Naive thymus-derived CD4-positive, alpha-beta T cell (primary cell): ENCODE measurements at regions of chr3 and their contacts with region 1.

Region 1: GRCh38 chr3:195411836-195412235 is 31.0 kb downstream of the ACAP2 start:
- DNase-seq: no peak
- ATAC-seq: no peak
- H3K4me3 ChIP-seq: no peak overlapping the region
- H3K4me3 Mint-ChIP-seq: no peak overlapping the region
- H3K27ac ChIP-seq: no peak overlapping the region
- H3K27ac Mint-ChIP-seq: no peak overlapping the region
- H3K4me1 ChIP-seq: peaks cover 11 to 26% of the 10 kb centered on the region in 2 donors
- H3K4me1 Mint-ChIP-seq: peaks cover 36 to 87% (median 75%) of the 10 kb centered on the region in 7 donors
- H3K27me3 ChIP-seq: no peaks in the 10 kb centered on the region
- H3K27me3 Mint-ChIP-seq: no peaks in the 10 kb centered on the region

Region 2: GRCh38 chr3:195377247-195377646 is 34.6 kb before region 1 on chr3:
- CTCF ChIA-PET with region 1: no interaction called
- POLR2A ChIA-PET with region 1: no interaction called
- intact Hi-C with region 1: loop called in 1 of 2 experiments (anchors 5 kb)
- DNase-seq: no peak
- ATAC-seq: no peak
- H3K4me3 ChIP-seq: no peak overlapping the region
- H3K4me3 Mint-ChIP-seq: no peak overlapping the region
- H3K27ac ChIP-seq: no peak overlapping the region
- H3K27ac Mint-ChIP-seq: peak overlapping the region in 1 of 9 donors; percentile 10
- H3K4me1 ChIP-seq: no peaks in the 10 kb centered on the region
- H3K4me1 Mint-ChIP-seq: peaks cover 0 to 21% (median 6%) of the 10 kb centered on the region in 7 donors
- H3K27me3 ChIP-seq: no peaks in the 10 kb centered on the region
- H3K27me3 Mint-ChIP-seq: no peaks in the 10 kb centered on the region

Region 3: GRCh38 chr3:195450731-195451229 is 38.9 kb after region 1 on chr3:
- CTCF ChIA-PET with region 1: no interaction called
- POLR2A ChIA-PET with region 1: no interaction called
- intact Hi-C with region 1: no loop called
- DNase-seq: no peak
- ATAC-seq: peak; percentile 37
- H3K4me3 ChIP-seq: no peak overlapping the region
- H3K4me3 Mint-ChIP-seq: no peak overlapping the region
- H3K27ac ChIP-seq: no peak overlapping the region
- H3K27ac Mint-ChIP-seq: no peak overlapping the region
- H3K4me1 ChIP-seq: peaks cover 0 to 5% of the 10 kb centered on the region in 2 donors
- H3K4me1 Mint-ChIP-seq: peaks cover 10 to 26% (median 12%) of the 10 kb centered on the region in 7 donors
- H3K27me3 ChIP-seq: no peaks in the 10 kb centered on the region
- H3K27me3 Mint-ChIP-seq: peaks cover 0 to 2% (median 0%) of the 10 kb centered on the region in 5 donors

Region 4: GRCh38 chr3:197103766-197104165 is 1691.9 kb after region 1 on chr3:
- CTCF ChIA-PET with region 1: no interaction called
- POLR2A ChIA-PET with region 1: no interaction called
- intact Hi-C with region 1: no loop called
- DNase-seq: no peak
- ATAC-seq: no peak
- H3K4me3 ChIP-seq: no peak overlapping the region
- H3K4me3 Mint-ChIP-seq: no peak overlapping the region
- H3K27ac ChIP-seq: no peak overlapping the region
- H3K27ac Mint-ChIP-seq: no peak overlapping the region
- H3K4me1 ChIP-seq: no peaks in the 10 kb centered on the region
- H3K4me1 Mint-ChIP-seq: no peaks in the 10 kb centered on the region
- H3K27me3 ChIP-seq: no peaks in the 10 kb centered on the region
- H3K27me3 Mint-ChIP-seq: no peaks in the 10 kb centered on the region